ENCODE measurements at regions of chr12 and their contacts with region 1.

Region 1: GRCh38 chr12:131642101-131642540 is 68.8 kb upstream of the SFSWAP start:
- DNase-seq: no peak
- ATAC-seq: no peak
- H3K4me3 ChIP-seq: no peak overlapping the region
- H3K27ac ChIP-seq: no peak overlapping the region
- H3K4me1 ChIP-seq: no peaks in the 10 kb centered on the region
- H3K27me3 ChIP-seq: no peaks in the 10 kb centered on the region

Region 2: GRCh38 chr12:131311764-131312163 is 330.4 kb before region 1 on chr12:
- intact Hi-C with region 1: loop called in 1 of 4 experiments (anchors 5 kb)
- DNase-seq: no peak
- ATAC-seq: no peak
- H3K4me3 ChIP-seq: no peak overlapping the region
- H3K27ac ChIP-seq: no peak overlapping the region
- H3K4me1 ChIP-seq: no peaks in the 10 kb centered on the region
- H3K27me3 ChIP-seq: no peaks in the 10 kb centered on the region